ENCODE measurements at regions of chr1 and their contacts with region 1.

Region 1: DNA sequence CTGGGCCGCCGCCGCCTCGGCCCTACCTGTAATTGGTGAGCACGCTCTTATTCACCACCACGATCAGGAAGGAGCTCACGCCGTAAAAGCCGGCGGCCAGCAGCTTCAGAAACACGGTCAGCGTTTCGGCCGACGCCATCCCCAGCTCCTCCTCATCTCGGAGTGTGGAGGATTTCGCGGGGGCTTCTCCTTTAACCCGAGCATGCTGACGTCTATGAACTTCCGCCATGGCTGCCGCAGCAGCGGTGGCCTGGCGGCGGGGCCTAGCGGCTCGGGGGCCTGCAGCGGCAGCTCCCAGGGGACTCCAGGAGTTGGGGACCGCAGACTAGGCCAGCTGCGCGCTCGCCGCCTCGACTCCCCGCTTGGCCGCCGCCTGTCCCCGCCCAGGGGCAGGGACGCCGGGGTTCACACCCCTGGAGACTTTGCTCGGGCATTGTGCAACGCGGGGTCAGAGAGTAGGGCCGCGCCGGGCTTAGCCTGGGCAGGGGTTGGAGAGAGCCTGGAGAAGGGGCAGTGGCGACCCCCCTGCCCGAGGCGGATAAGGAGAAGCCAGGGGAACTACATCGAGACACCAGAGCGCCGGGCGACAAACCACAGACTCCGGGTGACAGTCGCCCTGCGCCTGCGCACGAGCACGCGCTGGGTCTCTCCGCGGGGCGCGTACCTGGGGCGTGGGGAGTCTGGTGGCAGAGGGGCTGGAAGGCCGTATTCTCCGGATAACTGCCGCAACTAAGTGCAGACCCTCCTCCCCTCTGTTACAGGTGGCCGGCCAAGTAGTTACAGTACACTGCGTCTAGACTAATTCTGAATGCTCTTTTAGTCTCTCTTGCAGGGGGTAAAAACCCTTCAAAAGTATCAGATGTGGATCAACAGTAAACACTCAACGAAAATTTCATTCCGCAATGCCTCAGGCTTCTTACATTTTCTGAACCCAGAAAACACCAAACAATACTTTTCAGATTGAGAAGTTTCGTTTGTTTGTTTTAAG is at the start of gene SLC35D1:
- DNase-seq: peak; percentile 37 to 70
- ATAC-seq: peak; percentile 76 to 85
- H3K4me3 ChIP-seq: peak within 1 kb of the TSS; percentile 73 to 91 (median 86)
- H3K27ac ChIP-seq: peak within 1 kb of the TSS; percentile 91 to 97 (median 94)
- H3K4me1 ChIP-seq: peaks cover 21 to 24% of the 10 kb centered on the region in 2 donors
- H3K27me3 ChIP-seq: no peaks in the 10 kb centered on the region
- CTCF ChIP-seq: peak in 1 of 5 experiments; percentile 5
- POLR2A ChIP-seq: peak; percentile 72 to 90
- total RNA-seq, gene SLC35D1: 6.7 to 9.3 (median 8.1) TPM

Region 2: DNA sequence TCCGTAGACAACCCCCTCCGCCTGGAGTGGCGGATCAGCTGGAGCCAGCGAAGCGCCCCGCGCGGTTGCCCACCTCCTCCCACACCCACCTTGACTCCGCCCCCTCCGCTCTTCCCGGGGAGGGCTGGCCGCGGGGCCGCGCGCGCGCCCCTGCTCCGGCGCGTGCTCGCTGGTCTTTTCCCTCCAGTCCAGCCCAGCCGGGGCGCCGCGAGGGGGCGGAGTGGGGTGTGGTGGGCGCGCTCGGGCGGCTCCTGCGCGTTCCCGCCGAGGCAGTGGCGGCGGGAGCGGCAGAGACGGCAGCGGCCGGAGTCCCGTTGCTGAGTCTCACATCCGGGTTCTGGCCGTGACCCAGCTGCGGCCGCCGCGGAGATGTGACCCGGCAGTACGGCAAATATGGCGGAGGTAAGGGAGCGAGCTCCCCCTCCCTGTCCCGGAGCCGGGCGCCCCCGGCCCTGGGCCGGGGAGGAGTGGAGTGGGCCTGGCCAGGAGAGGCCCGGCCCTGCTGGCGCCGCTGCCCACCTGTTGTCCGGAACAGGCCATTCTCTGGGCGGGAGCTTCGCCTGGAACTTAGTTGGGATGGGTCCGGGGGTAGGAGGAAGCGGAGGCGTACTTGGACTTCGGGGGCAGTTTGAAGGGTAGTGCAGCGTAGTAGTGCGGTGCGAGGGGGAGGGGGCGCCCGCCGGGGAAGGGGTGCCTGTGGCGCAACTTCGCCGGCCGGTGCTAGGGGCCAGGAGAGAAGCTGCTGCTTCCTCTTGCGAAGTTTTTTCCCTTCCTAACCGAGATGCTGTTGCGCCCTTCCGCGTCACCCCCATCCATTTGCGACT is 123.9 kb before region 1 on chr1:
- in situ Hi-C with region 1: loop called in 2 of 4 experiments (anchors 10 kb)
- intact Hi-C with region 1: loop called (anchors 2 kb)
- DNase-seq: peak; percentile 88 to 93
- ATAC-seq: peak; percentile 75 to 79
- H3K4me3 ChIP-seq: peak overlapping the region; percentile 91 to 99 (median 95)
- H3K27ac ChIP-seq: peak overlapping the region; percentile 96 to 100 (median 98)
- H3K4me1 ChIP-seq: peaks cover 43 to 56% of the 10 kb centered on the region in 2 donors
- H3K27me3 ChIP-seq: no peaks in the 10 kb centered on the region
- CTCF ChIP-seq: peak in 4 of 5 experiments; percentile 3 to 69 (median 38)
- POLR2A ChIP-seq: peak; percentile 82 to 86

Region 3: DNA sequence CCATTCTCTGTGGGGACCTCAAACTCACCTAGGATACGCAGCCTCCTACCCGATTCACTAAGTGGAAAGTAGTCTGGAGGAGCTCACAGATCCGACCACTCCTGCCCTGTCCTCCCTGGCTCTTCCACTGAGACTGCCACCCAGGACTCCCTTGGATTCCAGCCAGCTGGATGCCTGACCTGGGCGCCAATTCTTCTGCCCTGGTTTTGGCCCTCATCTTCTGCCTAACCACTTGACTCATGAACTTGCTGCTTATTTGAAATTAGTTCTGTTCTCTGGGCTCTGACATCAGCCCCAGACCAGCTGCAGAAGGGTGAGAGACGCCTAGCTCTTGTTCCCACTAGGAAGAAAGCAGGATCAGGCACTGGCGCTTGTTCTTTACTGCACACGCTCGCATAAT is 49.0 kb before region 1 on chr1:
- in situ Hi-C with region 1: no loop called
- intact Hi-C with region 1: loop called (anchors 2 kb)
- DNase-seq: peak in 1 of 2 donors; percentile 60
- ATAC-seq: peak in 1 of 2 donors; percentile 16
- H3K4me3 ChIP-seq: no peak overlapping the region
- H3K27ac ChIP-seq: peak overlapping the region; percentile 54 to 80 (median 78)
- H3K4me1 ChIP-seq: peaks cover 38 to 47% of the 10 kb centered on the region in 2 donors
- H3K27me3 ChIP-seq: no peaks in the 10 kb centered on the region
- CTCF ChIP-seq: no peak
- POLR2A ChIP-seq: no peak

Region 4: GRCh38 chr1:67149179-67149770 is 95.2 kb after region 1 on chr1:
- in situ Hi-C with region 1: no loop called
- intact Hi-C with region 1: loop called (anchors 5 kb)
- DNase-seq: peak; percentile 37 to 62
- ATAC-seq: peak; percentile 91 to 99
- H3K4me3 ChIP-seq: no peak overlapping the region
- H3K27ac ChIP-seq: no peak overlapping the region
- H3K4me1 ChIP-seq: no peaks in the 10 kb centered on the region
- H3K27me3 ChIP-seq: no peaks in the 10 kb centered on the region
- CTCF ChIP-seq: peak; percentile 63 to 90 (median 77)
- POLR2A ChIP-seq: no peak

Region 5: DNA sequence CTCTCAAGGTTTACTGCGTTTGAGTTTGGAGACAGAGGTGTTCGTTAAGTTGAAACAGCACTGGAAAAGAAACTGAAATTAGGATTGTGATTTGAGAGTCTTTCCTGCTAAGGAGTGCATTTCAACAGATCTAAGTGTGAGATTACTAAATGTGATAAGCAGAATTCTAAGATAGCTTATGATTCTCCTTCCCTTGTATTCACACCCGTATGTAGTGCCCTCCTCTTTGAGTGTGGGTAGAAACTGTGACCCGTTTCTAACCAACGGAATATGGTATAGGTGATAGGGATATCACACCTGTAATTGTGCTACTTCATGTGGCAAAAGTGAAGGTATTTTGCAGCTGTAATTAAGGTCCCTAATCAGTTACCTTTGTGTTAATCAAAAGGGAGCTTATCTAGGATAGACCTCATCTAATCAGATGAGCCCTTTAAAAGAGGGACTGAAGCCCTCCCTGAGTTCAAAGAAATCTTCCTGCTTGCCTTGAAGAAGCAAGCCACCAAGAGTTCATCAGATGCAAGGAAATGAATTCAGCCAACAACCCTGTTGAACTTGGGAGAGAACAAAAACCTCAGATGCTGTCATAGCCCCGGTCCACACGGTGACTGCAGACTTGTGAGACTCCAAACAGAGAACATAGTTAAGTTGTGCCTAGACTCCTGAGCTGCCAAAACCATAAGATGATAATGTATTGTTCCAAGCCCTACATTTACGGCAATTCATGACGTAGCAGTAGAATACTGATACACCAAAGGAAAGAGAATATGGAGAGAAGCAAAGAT is 240.9 kb after region 1 on chr1:
- in situ Hi-C with region 1: no loop called
- intact Hi-C with region 1: no loop called
- DNase-seq: no peak
- ATAC-seq: no peak
- H3K4me3 ChIP-seq: no peak overlapping the region
- H3K27ac ChIP-seq: no peak overlapping the region
- H3K4me1 ChIP-seq: no peaks in the 10 kb centered on the region
- H3K27me3 ChIP-seq: no peaks in the 10 kb centered on the region
- CTCF ChIP-seq: no peak
- POLR2A ChIP-seq: no peak

Region 6: GRCh38 chr1:68301471-68302001 is 1247.5 kb after region 1 on chr1:
- in situ Hi-C with region 1: no loop called
- intact Hi-C with region 1: no loop called
- DNase-seq: no peak
- ATAC-seq: no peak
- H3K4me3 ChIP-seq: no peak overlapping the region
- H3K27ac ChIP-seq: no peak overlapping the region
- H3K4me1 ChIP-seq: no peaks in the 10 kb centered on the region
- H3K27me3 ChIP-seq: no peaks in the 10 kb centered on the region
- CTCF ChIP-seq: no peak
- POLR2A ChIP-seq: no peak

Measured in gastrocnemius medialis (tissue), 4 donors.